Left cardiac atrium (tissue), 4 donors: ENCODE measurements at regions of chr3 and their contacts with region 1.

Region 1: GRCh38 chr3:8501371-8502131 is at the start of gene LMCD1:
- DNase-seq: peak; percentile 96
- ATAC-seq: peak; percentile 98
- total RNA-seq, gene LMCD1: 52.9 to 63.7 TPM

Region 2: GRCh38 chr3:8307545-8308110 is 193.9 kb before region 1 on chr3:
- intact Hi-C with region 1: no loop called
- DNase-seq: no peak
- ATAC-seq: no peak

Region 3: GRCh38 chr3:8589880-8590556 is 88.5 kb after region 1 on chr3:
- intact Hi-C with region 1: loop called in 1 of 2 experiments (anchors 10 kb)
- DNase-seq: no peak
- ATAC-seq: peak in 1 of 2 donors; percentile 24

Region 4: DNA sequence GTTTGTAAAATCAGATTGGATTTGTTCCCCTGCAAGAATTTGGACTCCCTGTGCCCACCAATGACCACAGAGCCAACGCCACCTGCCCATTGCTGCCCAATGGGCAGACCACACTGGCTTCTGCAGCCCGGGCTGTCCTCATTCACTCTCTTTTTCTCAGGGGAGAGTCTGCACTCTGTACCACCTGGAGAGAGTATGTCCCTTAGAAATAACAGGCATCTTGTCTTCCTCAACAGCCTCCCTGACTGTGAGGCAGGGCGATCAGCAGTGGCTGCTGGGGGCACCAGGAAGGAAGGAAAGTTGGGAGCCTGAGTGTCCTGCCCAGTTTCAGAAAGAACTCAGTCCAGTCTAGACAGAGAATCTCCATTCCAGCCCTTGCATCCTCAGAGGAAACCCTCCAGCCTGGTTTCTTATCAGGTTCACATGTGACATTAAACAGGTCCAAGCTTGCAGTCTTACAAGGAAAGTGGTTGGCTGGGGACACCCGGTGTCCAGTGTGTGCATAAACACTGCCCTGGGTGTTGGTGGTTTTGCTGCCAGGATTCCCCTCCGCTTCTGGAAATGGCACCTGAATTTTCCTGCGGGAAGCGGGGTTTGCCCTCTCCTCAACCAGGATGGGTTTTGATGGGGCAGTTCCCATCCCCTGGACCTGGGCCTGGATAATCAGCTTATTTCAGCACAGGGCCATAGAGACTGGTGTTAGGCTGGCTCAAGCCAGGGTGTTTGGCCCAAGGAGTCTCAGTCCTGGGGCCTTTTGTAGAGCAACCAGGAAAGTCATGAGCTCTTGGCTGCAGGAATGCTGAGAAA is 105.9 kb after region 1 on chr3:
- intact Hi-C with region 1: loop called in 1 of 2 experiments (anchors 10 kb)
- DNase-seq: peak; percentile 73
- ATAC-seq: peak; percentile 96 to 99

Region 5: GRCh38 chr3:8663177-8664061 is 161.9 kb after region 1 on chr3:
- intact Hi-C with region 1: no loop called
- DNase-seq: peak; percentile 64
- ATAC-seq: peak in 1 of 2 donors; percentile 37

Region 6: DNA sequence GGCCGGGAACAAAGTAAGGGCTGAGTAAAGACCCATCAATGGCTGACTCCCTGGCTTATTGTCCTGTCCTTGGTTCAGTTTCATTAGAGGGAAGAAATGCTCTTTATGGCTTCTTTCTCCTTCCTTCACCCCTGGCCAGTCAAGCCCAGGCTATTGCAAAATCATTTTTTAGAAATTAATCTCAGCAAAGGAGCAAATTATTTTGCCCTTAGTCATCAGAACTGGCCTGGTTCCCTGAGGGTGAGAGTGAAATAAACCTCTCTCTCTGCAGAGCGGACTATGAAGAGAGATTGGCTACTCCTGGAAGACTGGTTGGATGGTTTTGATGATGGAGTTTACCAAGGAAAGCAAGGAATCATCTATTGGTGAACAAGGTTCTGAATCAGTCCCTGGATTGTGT is 320.6 kb after region 1 on chr3:
- intact Hi-C with region 1: no loop called
- DNase-seq: no peak
- ATAC-seq: no peak